Psoas muscle (tissue), 8 donors: ENCODE measurements at regions of chrX and their contacts with region 1.

Region 1: GRCh38 chrX:100636321-100636991 is at the start of gene TSPAN6:
- DNase-seq: peak; percentile 77 to 86
- ATAC-seq: peak; percentile 75 to 98 (median 94)
- H3K4me3 ChIP-seq: peak within 1 kb of the TSS; percentile 77
- H3K27ac ChIP-seq: peak within 1 kb of the TSS; percentile 46
- H3K4me1 ChIP-seq: no peaks in the 10 kb centered on the region
- H3K27me3 ChIP-seq: peaks cover 0 to 20% (median 0%) of the 10 kb centered on the region in 3 donors
- CTCF ChIP-seq: peak; percentile 33
- total RNA-seq, gene TSPAN6: 2.1 to 3.8 (median 2.8) TPM

Region 2: GRCh38 chrX:100449696-100450608 is 186.5 kb before region 1 on chrX:
- intact Hi-C with region 1: no loop called
- DNase-seq: peak; percentile 30 to 64
- ATAC-seq: peak in 2 of 4 donors; percentile 38
- H3K4me3 ChIP-seq: no peak overlapping the region
- H3K27ac ChIP-seq: no peak overlapping the region
- H3K4me1 ChIP-seq: no peaks in the 10 kb centered on the region
- H3K27me3 ChIP-seq: peaks cover 0 to 4% (median 0%) of the 10 kb centered on the region in 3 donors
- CTCF ChIP-seq: no peak

Region 3: GRCh38 chrX:100477958-100478357 is 158.5 kb before region 1 on chrX:
- intact Hi-C with region 1: no loop called
- DNase-seq: no peak
- ATAC-seq: peak in 1 of 4 donors; percentile 65
- H3K4me3 ChIP-seq: no peak overlapping the region
- H3K27ac ChIP-seq: peak overlapping the region; percentile 30
- H3K4me1 ChIP-seq: no peaks in the 10 kb centered on the region
- H3K27me3 ChIP-seq: no peaks in the 10 kb centered on the region
- CTCF ChIP-seq: no peak

Region 4: GRCh38 chrX:100512471-100512870 is 124.0 kb before region 1 on chrX:
- intact Hi-C with region 1: loop called in 1 of 2 experiments (anchors 5 kb)
- DNase-seq: no peak
- ATAC-seq: peak in 1 of 4 donors; percentile 45
- H3K4me3 ChIP-seq: no peak overlapping the region
- H3K27ac ChIP-seq: no peak overlapping the region
- H3K4me1 ChIP-seq: no peaks in the 10 kb centered on the region
- H3K27me3 ChIP-seq: peaks cover 0 to 3% (median 0%) of the 10 kb centered on the region in 3 donors
- CTCF ChIP-seq: peak; percentile 68